ENCODE measurements at regions of chr4 and their contacts with region 1.

Region 1: GRCh38 chr4:99088481-99089365 is at the start of gene ADH5:
- DNase-seq: peak; percentile 86 to 96 (median 91)
- ATAC-seq: peak; percentile 95
- H3K4me3 ChIP-seq: peak within 1 kb of the TSS; percentile 93
- H3K4me3 Mint-ChIP-seq: peak within 1 kb of the TSS; percentile 95
- H3K27ac ChIP-seq: peak within 1 kb of the TSS; percentile 76 to 82
- H3K27ac Mint-ChIP-seq: peak within 1 kb of the TSS; percentile 93
- H3K4me1 ChIP-seq: peaks cover 25% of the 10 kb centered on the region
- H3K4me1 Mint-ChIP-seq: peaks cover 65% of the 10 kb centered on the region
- H3K27me3 ChIP-seq: no peaks in the 10 kb centered on the region
- H3K27me3 Mint-ChIP-seq: no peaks in the 10 kb centered on the region
- CTCF ChIP-seq: no peak
- total RNA-seq, gene ADH5: 49.1 to 52.0 TPM

Region 2: DNA sequence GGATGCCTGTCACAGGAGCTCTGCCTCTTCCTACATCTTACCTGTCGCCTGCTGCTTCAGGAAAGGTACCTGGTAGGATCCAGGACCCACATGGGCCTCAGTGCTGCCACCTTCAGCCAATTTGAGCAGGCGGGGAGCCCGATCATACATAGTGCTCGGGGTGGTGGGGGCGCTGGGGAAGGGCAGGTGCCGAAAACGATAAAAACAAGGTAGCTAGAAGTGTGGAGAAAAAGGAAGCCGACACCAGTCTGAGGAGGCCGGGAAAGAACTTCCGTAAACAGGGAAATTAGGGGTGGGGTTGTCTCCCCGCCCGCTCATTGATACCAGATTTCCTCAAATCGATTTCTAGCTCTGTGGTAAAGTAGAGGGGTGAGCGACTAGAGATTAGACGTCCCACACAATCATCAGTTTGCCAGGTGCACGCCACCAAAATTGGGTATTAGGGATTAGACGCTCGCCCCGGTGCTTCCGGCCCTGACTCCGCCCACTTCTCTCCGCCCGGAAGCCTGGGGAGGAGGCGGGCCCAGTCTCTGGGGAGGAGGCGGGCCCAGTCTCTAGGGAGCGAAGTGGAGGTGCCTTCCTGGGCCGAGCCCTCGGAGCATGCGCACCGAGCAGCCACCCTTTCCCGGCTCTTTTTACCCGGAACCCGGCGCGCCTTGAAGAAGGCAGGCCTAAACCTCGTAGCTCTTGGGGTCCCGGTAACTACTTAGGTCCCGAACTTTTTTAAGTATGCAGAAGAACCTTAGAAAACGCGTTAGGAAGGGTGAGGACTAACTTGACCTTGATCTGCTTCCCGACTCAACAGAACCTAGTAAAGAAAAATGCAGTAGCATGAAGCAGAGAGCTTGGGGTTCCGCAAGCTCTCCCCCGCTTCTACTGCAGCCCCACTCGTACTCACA is 945.5 kb before region 1 on chr4 and contains the start of gene STPG2:
- CTCF ChIA-PET with region 1: no interaction called
- POLR2A ChIA-PET with region 1: interaction called, 5 read pairs
- intact Hi-C with region 1: loop called in 1 of 2 experiments (anchors 5 kb)
- DNase-seq: peak; percentile 85 to 97 (median 94)
- ATAC-seq: peak; percentile 98
- H3K4me3 ChIP-seq: peak within 1 kb of the TSS; percentile 88
- H3K4me3 Mint-ChIP-seq: peak within 1 kb of the TSS; percentile 90
- H3K27ac ChIP-seq: peak within 1 kb of the TSS; percentile 75 to 96
- H3K27ac Mint-ChIP-seq: peak within 1 kb of the TSS; percentile 93
- H3K4me1 ChIP-seq: peaks cover 17% of the 10 kb centered on the region
- H3K4me1 Mint-ChIP-seq: peaks cover 21% of the 10 kb centered on the region
- H3K27me3 ChIP-seq: no peaks in the 10 kb centered on the region
- H3K27me3 Mint-ChIP-seq: no peaks in the 10 kb centered on the region
- CTCF ChIP-seq: peak; percentile 73
- total RNA-seq, gene STPG2: 0.22 to 0.28 TPM

Region 3: GRCh38 chr4:98864560-98864959 is 224.2 kb before region 1 on chr4:
- CTCF ChIA-PET with region 1: no interaction called
- POLR2A ChIA-PET with region 1: no interaction called
- intact Hi-C with region 1: no loop called
- DNase-seq: no peak
- ATAC-seq: no peak
- H3K4me3 ChIP-seq: no peak overlapping the region
- H3K4me3 Mint-ChIP-seq: no peak overlapping the region
- H3K27ac ChIP-seq: no peak overlapping the region
- H3K27ac Mint-ChIP-seq: no peak overlapping the region
- H3K4me1 ChIP-seq: no peaks in the 10 kb centered on the region
- H3K4me1 Mint-ChIP-seq: no peaks in the 10 kb centered on the region
- H3K27me3 ChIP-seq: no peaks in the 10 kb centered on the region
- H3K27me3 Mint-ChIP-seq: no peaks in the 10 kb centered on the region
- CTCF ChIP-seq: no peak

Region 4: GRCh38 chr4:99043346-99043745 is 45.4 kb before region 1 on chr4:
- CTCF ChIA-PET with region 1: interaction called, 4 read pairs
- POLR2A ChIA-PET with region 1: interaction called, 22 read pairs
- intact Hi-C with region 1: loop called in 1 of 2 experiments (anchors 5 kb)
- DNase-seq: peak in 3 of 14 experiments; percentile 61 to 86 (median 61)
- ATAC-seq: peak; percentile 96
- H3K4me3 ChIP-seq: no peak overlapping the region
- H3K4me3 Mint-ChIP-seq: peak overlapping the region; percentile 8
- H3K27ac ChIP-seq: peak overlapping the region; percentile 48 to 81
- H3K27ac Mint-ChIP-seq: peak overlapping the region; percentile 85
- H3K4me1 ChIP-seq: peaks cover 5% of the 10 kb centered on the region
- H3K4me1 Mint-ChIP-seq: peaks cover 31% of the 10 kb centered on the region
- H3K27me3 ChIP-seq: no peaks in the 10 kb centered on the region
- H3K27me3 Mint-ChIP-seq: no peaks in the 10 kb centered on the region
- CTCF ChIP-seq: no peak

Measured in CD4-positive, alpha-beta T cell (primary cell).